CD4-positive, alpha-beta T cell (primary cell): ENCODE measurements at regions of chr9 and their contacts with region 1.

Region 1: DNA sequence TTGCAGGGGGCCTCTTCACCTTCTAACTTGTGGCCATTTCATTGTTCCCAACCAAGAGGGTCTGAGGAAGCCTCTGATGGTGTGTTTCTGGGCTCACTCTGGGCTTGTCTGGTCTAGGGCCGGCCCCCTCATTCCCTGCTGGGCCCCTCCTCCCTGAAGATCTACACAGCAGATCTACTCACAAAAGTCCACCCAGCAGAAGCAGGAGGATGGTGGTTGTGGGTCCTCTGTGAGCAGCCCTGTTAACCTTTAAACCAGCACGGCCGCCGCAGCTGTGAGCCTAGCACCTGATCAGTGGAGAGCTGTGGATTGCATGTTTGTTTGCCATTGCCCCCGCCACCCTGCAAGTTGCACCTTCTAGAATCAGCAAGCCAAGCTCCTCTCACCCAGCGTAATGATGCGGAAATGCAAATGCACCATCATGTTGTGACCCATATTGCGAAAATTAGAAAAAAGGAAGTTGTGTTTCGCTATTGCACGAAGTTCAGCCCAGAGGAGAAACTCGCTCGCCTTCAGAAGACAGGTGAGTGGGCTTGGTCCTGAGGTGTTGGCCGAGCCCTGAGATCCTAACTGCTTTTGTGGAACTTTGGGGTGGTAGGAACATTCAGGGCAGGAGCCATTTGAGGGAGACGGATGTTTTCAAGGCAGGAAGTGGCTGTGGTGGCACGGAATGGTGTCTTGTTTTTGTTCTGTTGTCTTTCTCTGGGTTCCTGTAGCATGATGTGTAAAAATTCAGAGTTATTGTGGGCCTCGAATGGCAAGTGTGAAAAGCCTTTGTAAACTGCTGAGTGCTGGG is 16.7 kb downstream of the FGD3 start:
- DNase-seq: peak; percentile 63 to 91 (median 78)
- ATAC-seq: peak; percentile 74
- H3K4me3 ChIP-seq: peak overlapping the region; percentile 69
- H3K4me3 Mint-ChIP-seq: peak overlapping the region; percentile 94
- H3K27ac ChIP-seq: peak overlapping the region; percentile 90 to 95
- H3K27ac Mint-ChIP-seq: peak overlapping the region; percentile 99
- H3K4me1 ChIP-seq: peaks cover 84% of the 10 kb centered on the region
- H3K4me1 Mint-ChIP-seq: peaks cover 73% of the 10 kb centered on the region
- H3K27me3 ChIP-seq: no peaks in the 10 kb centered on the region
- H3K27me3 Mint-ChIP-seq: no peaks in the 10 kb centered on the region
- CTCF ChIP-seq: no peak

Region 2: DNA sequence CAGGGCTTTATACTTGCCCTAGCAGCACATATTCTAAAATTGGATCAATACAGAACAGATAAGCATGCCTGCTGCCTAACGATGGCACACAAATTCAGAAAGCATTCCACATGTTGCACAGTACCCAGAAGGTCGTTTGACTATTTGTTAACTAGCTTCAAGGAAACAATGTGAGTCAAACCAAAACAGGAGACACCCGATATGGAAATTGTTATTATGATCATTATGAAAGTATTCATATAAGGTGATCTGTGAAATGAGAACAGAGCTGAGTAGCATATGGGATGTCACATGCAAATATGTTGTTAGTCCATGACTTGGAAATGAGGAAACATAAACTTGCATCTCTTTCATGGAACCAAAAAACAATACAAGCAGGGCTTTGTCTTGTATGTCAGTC is 143.1 kb before region 1 on chr9:
- CTCF ChIA-PET with region 1: no interaction called
- POLR2A ChIA-PET with region 1: no interaction called
- intact Hi-C with region 1: no loop called
- DNase-seq: no peak
- ATAC-seq: no peak
- H3K4me3 ChIP-seq: no peak overlapping the region
- H3K4me3 Mint-ChIP-seq: no peak overlapping the region
- H3K27ac ChIP-seq: no peak overlapping the region
- H3K27ac Mint-ChIP-seq: no peak overlapping the region
- H3K4me1 ChIP-seq: no peaks in the 10 kb centered on the region
- H3K4me1 Mint-ChIP-seq: no peaks in the 10 kb centered on the region
- H3K27me3 ChIP-seq: peaks cover 6 to 8% of the 10 kb centered on the region in 2 experiments
- H3K27me3 Mint-ChIP-seq: peaks cover 36% of the 10 kb centered on the region
- CTCF ChIP-seq: no peak

Region 3: DNA sequence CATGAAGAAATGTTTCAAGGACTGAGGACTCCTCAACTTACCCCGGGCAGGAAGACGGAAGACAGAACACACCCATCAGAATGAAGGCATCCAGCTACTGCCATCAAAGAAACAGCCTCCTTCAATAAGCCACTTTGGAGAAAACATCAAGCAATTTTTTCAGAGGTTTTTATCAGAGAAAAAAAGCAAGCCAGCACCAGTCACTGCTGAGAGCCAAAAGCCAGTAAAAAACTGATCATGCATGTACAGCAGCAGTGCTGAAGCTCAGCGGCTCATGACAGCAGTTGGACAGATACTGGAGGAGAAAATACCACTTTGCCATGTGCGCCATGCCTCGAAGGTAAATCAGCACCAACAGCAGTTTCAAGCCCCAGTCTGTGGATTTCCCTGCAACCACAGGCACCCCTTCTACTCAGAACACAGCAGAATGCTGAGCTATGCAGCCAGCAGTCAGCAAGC is 76.1 kb before region 1 on chr9:
- CTCF ChIA-PET with region 1: no interaction called
- POLR2A ChIA-PET with region 1: interaction called, 16 read pairs
- intact Hi-C with region 1: no loop called
- DNase-seq: peak in 8 of 14 experiments; percentile 11 to 70 (median 38)
- ATAC-seq: peak; percentile 66
- H3K4me3 ChIP-seq: no peak overlapping the region
- H3K4me3 Mint-ChIP-seq: peak overlapping the region; percentile 77
- H3K27ac ChIP-seq: no peak overlapping the region
- H3K27ac Mint-ChIP-seq: peak overlapping the region; percentile 86
- H3K4me1 ChIP-seq: peaks cover 36% of the 10 kb centered on the region
- H3K4me1 Mint-ChIP-seq: peaks cover 86% of the 10 kb centered on the region
- H3K27me3 ChIP-seq: no peaks in the 10 kb centered on the region
- H3K27me3 Mint-ChIP-seq: no peaks in the 10 kb centered on the region
- CTCF ChIP-seq: no peak

Region 4: GRCh38 chr9:92980085-92980745 is 16.2 kb after region 1 on chr9:
- CTCF ChIA-PET with region 1: no interaction called
- POLR2A ChIA-PET with region 1: interaction called, 41 read pairs
- intact Hi-C with region 1: no loop called
- DNase-seq: peak in 2 of 14 experiments; percentile 35 to 45
- ATAC-seq: peak; percentile 47
- H3K4me3 ChIP-seq: no peak overlapping the region
- H3K4me3 Mint-ChIP-seq: peak overlapping the region; percentile 34
- H3K27ac ChIP-seq: peak overlapping the region; percentile 49 to 59
- H3K27ac Mint-ChIP-seq: peak overlapping the region; percentile 81
- H3K4me1 ChIP-seq: peaks cover 56% of the 10 kb centered on the region
- H3K4me1 Mint-ChIP-seq: peaks cover 72% of the 10 kb centered on the region
- H3K27me3 ChIP-seq: no peaks in the 10 kb centered on the region
- H3K27me3 Mint-ChIP-seq: no peaks in the 10 kb centered on the region
- CTCF ChIP-seq: no peak

Region 5: GRCh38 chr9:93028448-93029006 is 64.5 kb after region 1 on chr9:
- CTCF ChIA-PET with region 1: no interaction called
- POLR2A ChIA-PET with region 1: interaction called, 84 read pairs
- intact Hi-C with region 1: no loop called
- DNase-seq: peak; percentile 54 to 94 (median 68)
- ATAC-seq: peak; percentile 85
- H3K4me3 ChIP-seq: peak overlapping the region; percentile 60
- H3K4me3 Mint-ChIP-seq: peak overlapping the region; percentile 91
- H3K27ac ChIP-seq: peak overlapping the region; percentile 92 to 95
- H3K27ac Mint-ChIP-seq: peak overlapping the region; percentile 99
- H3K4me1 ChIP-seq: peaks cover 99% of the 10 kb centered on the region
- H3K4me1 Mint-ChIP-seq: peaks cover 80% of the 10 kb centered on the region
- H3K27me3 ChIP-seq: no peaks in the 10 kb centered on the region
- H3K27me3 Mint-ChIP-seq: no peaks in the 10 kb centered on the region
- CTCF ChIP-seq: no peak

Region 6: DNA sequence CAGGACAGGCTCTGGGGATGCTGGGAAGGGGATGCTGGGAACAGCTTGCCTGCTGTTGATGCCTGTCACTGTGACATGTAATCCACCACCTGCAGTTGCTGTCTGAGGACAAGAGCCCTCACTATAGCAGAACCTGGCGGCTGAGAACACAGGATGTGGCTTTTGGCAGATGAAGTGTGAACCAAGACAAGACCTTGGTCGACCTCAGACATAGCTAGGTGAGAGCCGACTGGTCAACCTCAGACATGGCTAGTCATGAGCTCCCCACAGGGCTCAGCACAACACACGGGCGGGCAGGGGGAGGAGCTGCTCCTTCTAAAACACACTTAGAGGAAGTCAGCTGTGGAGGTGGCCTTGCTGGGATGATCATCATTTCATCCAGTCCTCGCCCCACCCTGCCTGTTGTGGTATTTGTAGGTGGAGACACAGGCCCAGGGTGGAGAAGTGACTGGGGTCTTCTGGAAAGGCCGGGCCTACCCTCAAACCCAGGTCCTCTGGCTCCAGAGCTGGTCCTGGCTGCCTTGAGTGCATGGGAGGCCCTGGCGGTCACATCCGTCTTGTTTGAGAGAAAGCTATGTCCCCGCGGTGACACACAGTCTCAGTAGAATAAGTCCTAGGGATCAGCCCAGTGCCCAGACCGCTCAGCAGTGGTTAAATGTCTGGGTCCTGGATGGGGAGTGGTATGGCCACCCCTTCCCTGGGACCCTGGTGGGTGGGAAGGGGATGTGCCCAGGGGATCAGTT is 100.5 kb after region 1 on chr9:
- CTCF ChIA-PET with region 1: interaction called, 4 read pairs
- POLR2A ChIA-PET with region 1: interaction called, 84 read pairs
- intact Hi-C with region 1: loop called (anchors 5 kb)
- DNase-seq: peak; percentile 74 to 97 (median 86)
- ATAC-seq: peak; percentile 87
- H3K4me3 ChIP-seq: peak overlapping the region; percentile 45
- H3K4me3 Mint-ChIP-seq: peak overlapping the region; percentile 91
- H3K27ac ChIP-seq: peak overlapping the region; percentile 83 to 90
- H3K27ac Mint-ChIP-seq: peak overlapping the region; percentile 100
- H3K4me1 ChIP-seq: peaks cover 80% of the 10 kb centered on the region
- H3K4me1 Mint-ChIP-seq: peaks cover 96% of the 10 kb centered on the region
- H3K27me3 ChIP-seq: no peaks in the 10 kb centered on the region
- H3K27me3 Mint-ChIP-seq: no peaks in the 10 kb centered on the region
- CTCF ChIP-seq: no peak

Region 7: GRCh38 chr9:93193148-93193755 is 229.2 kb after region 1 on chr9:
- CTCF ChIA-PET with region 1: no interaction called
- POLR2A ChIA-PET with region 1: no interaction called
- intact Hi-C with region 1: no loop called
- DNase-seq: no peak
- ATAC-seq: no peak
- H3K4me3 ChIP-seq: no peak overlapping the region
- H3K4me3 Mint-ChIP-seq: no peak overlapping the region
- H3K27ac ChIP-seq: no peak overlapping the region
- H3K27ac Mint-ChIP-seq: no peak overlapping the region
- H3K4me1 ChIP-seq: no peaks in the 10 kb centered on the region
- H3K4me1 Mint-ChIP-seq: no peaks in the 10 kb centered on the region
- H3K27me3 ChIP-seq: peaks cover 0 to 3% of the 10 kb centered on the region in 2 experiments
- H3K27me3 Mint-ChIP-seq: no peaks in the 10 kb centered on the region
- CTCF ChIP-seq: no peak

Region 8: DNA sequence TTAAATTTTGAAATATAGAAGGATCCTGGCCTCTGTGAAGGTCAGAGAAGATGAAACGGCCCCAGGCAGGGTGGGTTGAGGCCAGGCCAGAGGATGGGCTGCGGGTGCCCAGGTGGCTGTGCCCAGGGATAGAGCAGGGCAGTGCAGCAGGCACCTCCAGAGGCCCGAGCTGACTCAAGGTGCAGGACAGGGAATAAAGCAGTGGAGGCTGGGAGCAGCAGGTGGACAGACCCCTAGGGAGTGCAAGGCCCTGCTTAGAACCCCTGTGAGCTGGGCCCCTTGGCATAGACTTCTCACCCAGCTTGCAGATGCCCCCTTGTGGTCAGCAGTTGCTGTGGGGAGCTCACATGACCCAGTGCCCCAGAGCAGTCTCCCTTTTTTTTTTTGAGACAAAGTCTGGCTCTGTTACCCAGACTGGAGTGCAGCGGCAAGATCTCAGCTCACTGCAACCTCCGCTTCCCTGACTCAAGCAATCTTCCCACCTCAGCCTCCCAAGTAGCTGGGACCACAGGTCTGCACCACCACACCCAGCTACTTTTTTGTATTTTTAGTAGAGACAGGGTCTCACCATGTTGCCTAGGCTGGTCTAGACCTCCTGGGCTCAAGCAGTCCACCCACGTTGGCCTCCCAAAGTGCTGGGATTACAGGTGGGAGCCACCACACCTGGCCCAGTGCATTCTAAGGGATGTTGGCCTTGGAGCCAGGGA is 338.7 kb after region 1 on chr9:
- CTCF ChIA-PET with region 1: no interaction called
- POLR2A ChIA-PET with region 1: no interaction called
- intact Hi-C with region 1: loop called in 1 of 2 experiments (anchors 2 kb)
- DNase-seq: peak; percentile 36 to 82 (median 58)
- ATAC-seq: peak; percentile 91
- H3K4me3 ChIP-seq: no peak overlapping the region
- H3K4me3 Mint-ChIP-seq: no peak overlapping the region
- H3K27ac ChIP-seq: no peak overlapping the region
- H3K27ac Mint-ChIP-seq: no peak overlapping the region
- H3K4me1 ChIP-seq: peaks cover 8% of the 10 kb centered on the region
- H3K4me1 Mint-ChIP-seq: peaks cover 2% of the 10 kb centered on the region
- H3K27me3 ChIP-seq: no peaks in the 10 kb centered on the region
- H3K27me3 Mint-ChIP-seq: no peaks in the 10 kb centered on the region
- CTCF ChIP-seq: peak; percentile 59

Region 9: DNA sequence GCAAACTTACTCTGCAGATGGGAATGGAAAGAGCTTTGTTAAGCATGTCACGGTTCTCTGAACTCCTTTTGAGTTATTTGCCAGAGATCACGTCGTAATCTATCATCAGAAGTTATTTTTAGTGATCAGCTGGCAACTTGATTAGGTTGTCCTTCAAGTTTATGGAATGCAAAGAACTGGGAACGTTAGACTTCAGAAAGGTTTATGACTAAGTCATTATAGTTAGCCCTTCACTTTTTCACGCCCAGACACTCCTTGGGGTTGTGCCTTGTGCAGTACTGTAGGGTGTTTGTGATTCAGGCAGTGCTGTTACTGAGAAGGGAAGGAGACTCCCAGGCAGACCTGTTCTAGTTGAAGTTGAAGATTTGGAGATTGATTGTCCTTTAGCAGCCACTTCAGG is 585.6 kb after region 1 on chr9:
- CTCF ChIA-PET with region 1: no interaction called
- POLR2A ChIA-PET with region 1: no interaction called
- intact Hi-C with region 1: no loop called
- DNase-seq: no peak
- ATAC-seq: no peak
- H3K4me3 ChIP-seq: no peak overlapping the region
- H3K4me3 Mint-ChIP-seq: no peak overlapping the region
- H3K27ac ChIP-seq: no peak overlapping the region
- H3K27ac Mint-ChIP-seq: peak overlapping the region; percentile 14
- H3K4me1 ChIP-seq: no peaks in the 10 kb centered on the region
- H3K4me1 Mint-ChIP-seq: no peaks in the 10 kb centered on the region
- H3K27me3 ChIP-seq: no peaks in the 10 kb centered on the region
- H3K27me3 Mint-ChIP-seq: no peaks in the 10 kb centered on the region
- CTCF ChIP-seq: no peak